Posterior vena cava (tissue), 2 donors: ENCODE measurements at regions of chr10 and their contacts with region 1.

Region 1: DNA sequence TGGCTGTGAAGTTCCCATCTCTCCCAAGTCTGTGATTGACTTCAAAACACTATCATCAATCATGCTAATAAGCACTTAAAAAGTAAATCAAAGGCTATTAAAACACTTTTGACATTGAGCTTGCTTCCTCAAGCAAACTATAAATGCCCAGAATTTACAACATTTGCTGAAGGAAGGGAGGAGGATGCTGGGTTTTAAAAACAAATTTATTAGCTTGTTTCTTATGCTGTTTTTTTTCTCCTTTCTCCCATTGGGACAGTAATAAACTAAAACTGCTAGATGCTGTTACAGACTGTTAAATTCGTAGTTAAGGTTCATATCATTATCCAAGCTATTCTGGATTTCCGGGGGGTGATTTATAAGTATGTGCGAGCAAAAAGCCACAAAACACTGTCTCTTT is 250.5 kb downstream of the SORCS1 start:
- DNase-seq: no peak

Region 2: GRCh38 chr10:106935978-106936451 is 22.0 kb after region 1 on chr10:
- intact Hi-C with region 1: loop called in 1 of 2 experiments (anchors 1 kb)
- DNase-seq: no peak

Region 3: DNA sequence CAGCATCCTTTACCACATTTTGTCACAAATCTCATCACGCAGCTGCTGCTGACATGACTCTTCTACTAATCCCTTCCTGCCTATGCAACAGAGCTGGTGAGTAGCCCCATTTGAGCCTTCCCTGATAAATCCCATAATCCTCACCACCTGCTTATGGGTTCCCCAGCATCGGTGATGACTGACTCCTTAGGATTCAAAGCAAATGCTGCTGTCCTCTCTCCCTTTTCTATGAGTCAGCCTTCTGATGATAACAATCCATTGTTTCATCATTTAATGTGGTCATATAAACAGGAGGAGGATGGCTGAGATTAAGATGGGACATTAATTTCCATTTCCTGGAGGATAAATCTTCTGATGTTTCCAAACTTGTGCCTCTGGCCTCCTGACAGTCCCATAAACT is 177.1 kb after region 1 on chr10:
- intact Hi-C with region 1: no loop called
- DNase-seq: no peak